CD8-positive, alpha-beta memory T cell (primary cell): ENCODE measurements at regions of chr1 and their contacts with region 1.

Region 1: GRCh38 chr1:25037174-25038074 is 107.3 kb upstream of the RUNX3 start:
- DNase-seq: peak; percentile 25 to 77 (median 60)
- H3K4me3 ChIP-seq: no peak overlapping the region
- H3K4me3 Mint-ChIP-seq: peak overlapping the region in 5 of 7 donors; percentile 11 to 64 (median 36)
- H3K27ac ChIP-seq: no peak overlapping the region
- H3K27ac Mint-ChIP-seq: peak overlapping the region in 7 of 8 donors; percentile 49 to 87 (median 63)
- H3K4me1 ChIP-seq: peaks cover 62% of the 10 kb centered on the region
- H3K4me1 Mint-ChIP-seq: peaks cover 40 to 51% (median 49%) of the 10 kb centered on the region in 3 donors
- H3K27me3 ChIP-seq: no peaks in the 10 kb centered on the region
- H3K27me3 Mint-ChIP-seq: peaks cover 0 to 1% of the 10 kb centered on the region in 2 donors

Region 2: GRCh38 chr1:24847995-24848881 is 189.2 kb before region 1 on chr1:
- CTCF ChIA-PET with region 1: interaction called, 41 read pairs
- POLR2A ChIA-PET with region 1: interaction called, 4 read pairs
- DNase-seq: peak; percentile 82 to 95 (median 86)
- H3K4me3 ChIP-seq: peak overlapping the region; percentile 48
- H3K4me3 Mint-ChIP-seq: peak overlapping the region; percentile 66 to 84 (median 74)
- H3K27ac ChIP-seq: peak overlapping the region; percentile 27
- H3K27ac Mint-ChIP-seq: peak overlapping the region; percentile 73 to 95 (median 82)
- H3K4me1 ChIP-seq: peaks cover 4% of the 10 kb centered on the region
- H3K4me1 Mint-ChIP-seq: peaks cover 24 to 37% (median 25%) of the 10 kb centered on the region in 3 donors
- H3K27me3 ChIP-seq: no peaks in the 10 kb centered on the region
- H3K27me3 Mint-ChIP-seq: peaks cover 0 to 1% of the 10 kb centered on the region in 2 donors

Region 3: GRCh38 chr1:24930204-24931145 is 106.9 kb before region 1 on chr1 and contains the start of gene RUNX3:
- CTCF ChIA-PET with region 1: interaction called, 234 read pairs
- POLR2A ChIA-PET with region 1: interaction called, 18 read pairs
- DNase-seq: peak; percentile 91 to 96 (median 95)
- H3K4me3 ChIP-seq: peak within 1 kb of the TSS; percentile 77
- H3K4me3 Mint-ChIP-seq: peak within 1 kb of the TSS; percentile 87 to 99 (median 97)
- H3K27ac ChIP-seq: peak within 1 kb of the TSS; percentile 89
- H3K27ac Mint-ChIP-seq: peak within 1 kb of the TSS; percentile 85 to 100 (median 100)
- H3K4me1 ChIP-seq: peaks cover 51% of the 10 kb centered on the region
- H3K4me1 Mint-ChIP-seq: peaks cover 34 to 69% (median 54%) of the 10 kb centered on the region in 3 donors
- H3K27me3 ChIP-seq: no peaks in the 10 kb centered on the region
- H3K27me3 Mint-ChIP-seq: peaks cover 0 to 10% of the 10 kb centered on the region in 2 donors
- total RNA-seq, gene RUNX3: 218 to 241 TPM

Region 4: GRCh38 chr1:24952413-24952841 is 85.0 kb before region 1 on chr1:
- CTCF ChIA-PET with region 1: interaction called, 15 read pairs
- POLR2A ChIA-PET with region 1: interaction called, 3 read pairs
- DNase-seq: peak in 3 of 5 donors; percentile 36 to 70 (median 65)
- H3K4me3 ChIP-seq: no peak overlapping the region
- H3K4me3 Mint-ChIP-seq: peak overlapping the region in 6 of 7 donors; percentile 42 to 78 (median 65)
- H3K27ac ChIP-seq: no peak overlapping the region
- H3K27ac Mint-ChIP-seq: peak overlapping the region; percentile 2 to 93 (median 78)
- H3K4me1 ChIP-seq: peaks cover 61% of the 10 kb centered on the region
- H3K4me1 Mint-ChIP-seq: peaks cover 71 to 95% (median 80%) of the 10 kb centered on the region in 3 donors
- H3K27me3 ChIP-seq: no peaks in the 10 kb centered on the region
- H3K27me3 Mint-ChIP-seq: peaks cover 0 to 2% of the 10 kb centered on the region in 2 donors

Region 5: DNA sequence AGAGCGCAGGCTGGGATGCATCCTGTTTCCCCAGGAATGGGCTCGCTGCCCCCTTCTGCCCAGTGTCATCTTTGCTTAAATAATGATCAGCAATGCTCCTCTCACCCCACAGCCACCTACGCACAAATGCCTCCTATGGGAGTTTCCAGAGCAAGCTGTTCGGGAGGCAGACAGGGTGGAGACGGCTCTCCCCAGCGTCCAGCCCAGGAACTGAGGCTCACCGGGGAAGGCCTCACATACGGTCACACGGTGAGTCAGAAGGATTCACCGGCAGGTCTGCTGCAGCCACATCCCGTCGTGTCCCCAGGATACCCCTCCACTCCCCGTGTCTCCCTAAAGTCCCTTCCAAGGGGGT is 67.0 kb before region 1 on chr1:
- CTCF ChIA-PET with region 1: interaction called, 205 read pairs
- POLR2A ChIA-PET with region 1: interaction called, 22 read pairs
- DNase-seq: no peak
- H3K4me3 ChIP-seq: no peak overlapping the region
- H3K4me3 Mint-ChIP-seq: peak overlapping the region in 6 of 7 donors; percentile 32 to 67 (median 50)
- H3K27ac ChIP-seq: no peak overlapping the region
- H3K27ac Mint-ChIP-seq: peak overlapping the region in 6 of 8 donors; percentile 8 to 73 (median 56)
- H3K4me1 ChIP-seq: peaks cover 56% of the 10 kb centered on the region
- H3K4me1 Mint-ChIP-seq: peaks cover 40 to 62% (median 49%) of the 10 kb centered on the region in 3 donors
- H3K27me3 ChIP-seq: no peaks in the 10 kb centered on the region
- H3K27me3 Mint-ChIP-seq: no peaks in the 10 kb centered on the region

Region 6: GRCh38 chr1:24987875-24988557 is 49.4 kb before region 1 on chr1:
- CTCF ChIA-PET with region 1: interaction called, 12 read pairs
- POLR2A ChIA-PET with region 1: interaction called, 4 read pairs
- DNase-seq: peak in 1 of 5 donors; percentile 30
- H3K4me3 ChIP-seq: no peak overlapping the region
- H3K4me3 Mint-ChIP-seq: peak overlapping the region in 3 of 7 donors; percentile 8 to 58 (median 57)
- H3K27ac ChIP-seq: no peak overlapping the region
- H3K27ac Mint-ChIP-seq: peak overlapping the region in 7 of 8 donors; percentile 32 to 93 (median 68)
- H3K4me1 ChIP-seq: peaks cover 99% of the 10 kb centered on the region
- H3K4me1 Mint-ChIP-seq: peaks cover 88 to 96% (median 94%) of the 10 kb centered on the region in 3 donors
- H3K27me3 ChIP-seq: no peaks in the 10 kb centered on the region
- H3K27me3 Mint-ChIP-seq: peaks cover 0 to 4% of the 10 kb centered on the region in 2 donors

Region 7: DNA sequence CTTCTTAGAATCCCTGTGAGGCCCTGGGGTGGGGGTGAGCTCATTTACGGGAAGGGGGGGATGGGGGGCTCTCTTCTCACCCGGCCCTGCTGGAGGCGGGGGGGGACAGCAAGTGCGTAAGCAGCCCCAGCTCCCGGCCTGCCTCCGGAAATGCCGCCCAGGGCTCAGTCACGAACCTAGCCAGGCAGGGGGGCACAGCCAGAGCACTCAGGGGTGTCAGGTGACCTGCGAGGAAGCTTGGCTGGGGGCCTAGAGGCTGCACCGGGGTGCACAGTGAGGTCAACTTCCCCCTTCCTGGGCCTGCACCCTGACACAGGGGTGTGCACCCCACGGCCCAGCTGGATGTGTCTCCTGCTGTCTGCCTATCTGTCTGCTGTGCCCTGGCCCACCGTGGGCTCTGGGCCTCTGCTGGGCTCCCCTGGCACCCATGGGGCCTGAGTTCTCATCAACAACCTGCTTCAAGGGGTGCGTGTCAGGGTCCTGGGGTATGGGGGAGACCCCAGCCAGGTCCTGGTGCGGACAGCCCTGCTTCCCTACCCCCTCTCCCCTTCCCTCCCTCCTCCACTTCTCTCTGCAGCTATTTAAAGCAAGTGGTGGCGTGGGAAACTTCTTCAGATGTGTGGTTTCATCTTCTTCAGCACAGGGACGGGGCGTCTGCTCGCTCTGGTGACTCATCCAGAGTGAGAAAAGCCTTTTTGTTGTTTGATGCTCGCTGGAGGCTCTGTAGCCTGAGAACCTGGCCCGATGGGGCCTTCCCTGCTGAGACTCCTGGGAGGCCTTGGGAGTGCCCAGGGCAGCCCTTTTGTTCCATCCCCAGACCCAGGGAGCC is 14.8 kb before region 1 on chr1:
- CTCF ChIA-PET with region 1: interaction called, 19 read pairs
- POLR2A ChIA-PET with region 1: interaction called, 32 read pairs
- DNase-seq: peak; percentile 93 to 99 (median 96)
- H3K4me3 ChIP-seq: peak overlapping the region; percentile 58
- H3K4me3 Mint-ChIP-seq: peak overlapping the region; percentile 48 to 84 (median 75)
- H3K27ac ChIP-seq: peak overlapping the region; percentile 97
- H3K27ac Mint-ChIP-seq: peak overlapping the region; percentile 89 to 100 (median 98)
- H3K4me1 ChIP-seq: peaks cover 79% of the 10 kb centered on the region
- H3K4me1 Mint-ChIP-seq: peaks cover 66 to 81% (median 75%) of the 10 kb centered on the region in 3 donors
- H3K27me3 ChIP-seq: no peaks in the 10 kb centered on the region
- H3K27me3 Mint-ChIP-seq: no peaks in the 10 kb centered on the region

Region 8: GRCh38 chr1:25055961-25056360 is 18.5 kb after region 1 on chr1:
- CTCF ChIA-PET with region 1: no interaction called
- POLR2A ChIA-PET with region 1: no interaction called
- DNase-seq: peak in 1 of 5 donors; percentile 3
- H3K4me3 ChIP-seq: no peak overlapping the region
- H3K4me3 Mint-ChIP-seq: no peak overlapping the region
- H3K27ac ChIP-seq: no peak overlapping the region
- H3K27ac Mint-ChIP-seq: peak overlapping the region in 3 of 8 donors; percentile 17 to 83 (median 17)
- H3K4me1 ChIP-seq: no peaks in the 10 kb centered on the region
- H3K4me1 Mint-ChIP-seq: peaks cover 0 to 17% (median 4%) of the 10 kb centered on the region in 3 donors
- H3K27me3 ChIP-seq: no peaks in the 10 kb centered on the region
- H3K27me3 Mint-ChIP-seq: no peaks in the 10 kb centered on the region